Dorsolateral prefrontal cortex (tissue), 120 donors: ENCODE measurements at regions of chr3 and their contacts with region 1.

Region 1: DNA sequence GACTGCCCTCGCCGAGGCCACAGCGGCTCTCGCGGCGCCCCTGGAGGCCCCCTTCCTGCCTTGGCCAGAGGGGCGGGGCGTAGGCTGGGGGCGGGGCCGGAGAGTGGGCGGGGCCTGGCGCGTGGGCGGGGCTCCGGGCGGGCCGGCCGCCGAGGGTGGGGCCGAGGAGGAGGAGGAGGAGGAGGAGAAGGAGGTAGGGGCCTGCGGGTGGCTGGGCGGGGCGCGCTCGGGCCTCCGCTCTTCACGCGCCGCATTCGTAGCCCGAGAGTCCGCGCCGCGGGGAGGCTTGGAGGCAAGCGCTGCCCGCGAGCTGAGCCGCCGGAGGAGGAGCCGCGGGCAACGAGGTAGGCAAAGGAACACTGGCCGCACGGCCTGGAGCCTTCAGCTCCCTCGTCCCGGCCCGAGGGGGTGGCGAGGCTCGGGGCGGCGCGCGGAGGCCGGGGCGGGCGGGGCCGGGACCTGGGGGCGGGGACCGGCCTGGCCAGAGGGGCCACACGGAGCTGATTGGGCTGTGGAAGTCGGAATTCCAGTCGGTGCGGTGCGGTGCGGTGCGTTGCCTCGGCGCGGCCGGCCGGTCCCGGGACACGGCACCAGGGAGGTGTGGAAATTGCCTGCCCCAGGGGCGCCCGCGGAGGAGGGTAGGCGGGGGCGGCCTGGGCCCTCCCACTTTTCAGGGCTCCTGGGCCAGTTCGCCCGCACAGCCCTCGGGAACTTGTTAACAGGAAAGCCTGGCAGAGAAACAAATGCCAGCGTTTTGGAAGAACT is at the start of gene PPP2R3A:
- DNase-seq: peak; percentile 73 to 92 (median 82)
- H3K4me3 ChIP-seq: peak within 1 kb of the TSS; percentile 66 to 94 (median 86)
- H3K27ac ChIP-seq: peak within 1 kb of the TSS; percentile 42 to 95 (median 87)
- H3K27me3 ChIP-seq: no peaks in the 10 kb centered on the region
- CTCF ChIP-seq: peak in 13 of 56 donors; percentile 1 to 29 (median 16)
- total RNA-seq, gene PPP2R3A: 7.2 to 32.1 (median 14.4) TPM

Region 2: DNA sequence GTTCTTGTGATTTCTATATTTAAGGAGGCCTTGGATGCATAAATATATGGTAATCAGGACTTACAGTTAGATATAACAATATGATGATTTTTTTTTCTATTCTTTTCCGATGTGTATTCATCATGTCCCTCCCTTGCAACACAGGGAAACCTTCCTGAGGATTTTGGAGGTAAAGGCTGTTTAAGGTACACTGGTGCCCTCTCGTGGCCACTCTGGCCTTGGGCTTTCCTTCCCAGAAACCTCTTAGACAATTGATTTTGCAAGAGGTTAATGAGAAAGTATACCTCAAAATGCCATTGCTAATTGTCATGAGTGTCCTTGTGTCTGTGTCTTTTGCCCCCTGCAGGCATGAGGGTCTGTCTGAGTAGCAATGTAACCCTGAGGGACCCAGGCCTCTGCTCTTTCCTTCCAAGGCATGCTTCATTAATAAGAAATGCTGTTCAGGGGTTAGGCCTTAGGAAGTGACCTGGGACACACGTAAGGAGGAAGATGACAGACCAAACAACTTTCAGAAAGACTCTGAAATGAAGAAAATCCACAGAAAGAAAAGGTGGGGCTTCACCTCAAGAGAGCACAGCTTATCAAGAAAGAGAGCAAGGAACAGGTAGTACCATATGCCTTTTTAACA is 70.5 kb before region 1 on chr3:
- intact Hi-C with region 1: no loop called
- DNase-seq: peak; percentile 59 to 88 (median 74)
- H3K4me3 ChIP-seq: no peak overlapping the region
- H3K27ac ChIP-seq: no peak overlapping the region
- H3K27me3 ChIP-seq: no peaks in the 10 kb centered on the region
- CTCF ChIP-seq: peak; percentile 65 to 89 (median 79)

Region 3: DNA sequence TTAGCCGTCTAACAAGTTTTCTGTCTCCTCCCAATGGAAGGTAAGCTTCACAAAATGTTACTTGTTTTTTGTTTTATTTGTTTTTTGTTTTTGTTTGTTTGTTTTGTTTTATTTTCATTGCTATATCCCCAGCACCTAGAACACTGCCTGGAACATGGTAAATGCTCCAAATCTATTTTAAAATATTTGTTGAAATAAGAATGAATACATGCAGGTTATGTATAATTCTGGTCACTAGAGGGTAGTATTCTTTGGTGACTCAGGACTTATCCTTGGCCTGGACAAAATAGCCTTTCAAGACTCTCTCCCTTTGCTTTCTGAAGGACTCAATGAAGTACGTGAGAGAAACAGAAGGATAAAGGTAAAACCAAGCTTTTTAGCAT is 47.1 kb before region 1 on chr3:
- intact Hi-C with region 1: loop called in 1 of 2 experiments (anchors 5 kb)
- DNase-seq: no peak
- H3K4me3 ChIP-seq: no peak overlapping the region
- H3K27ac ChIP-seq: no peak overlapping the region
- H3K27me3 ChIP-seq: no peaks in the 10 kb centered on the region
- CTCF ChIP-seq: peak; percentile 21 to 82 (median 61)

Region 4: DNA sequence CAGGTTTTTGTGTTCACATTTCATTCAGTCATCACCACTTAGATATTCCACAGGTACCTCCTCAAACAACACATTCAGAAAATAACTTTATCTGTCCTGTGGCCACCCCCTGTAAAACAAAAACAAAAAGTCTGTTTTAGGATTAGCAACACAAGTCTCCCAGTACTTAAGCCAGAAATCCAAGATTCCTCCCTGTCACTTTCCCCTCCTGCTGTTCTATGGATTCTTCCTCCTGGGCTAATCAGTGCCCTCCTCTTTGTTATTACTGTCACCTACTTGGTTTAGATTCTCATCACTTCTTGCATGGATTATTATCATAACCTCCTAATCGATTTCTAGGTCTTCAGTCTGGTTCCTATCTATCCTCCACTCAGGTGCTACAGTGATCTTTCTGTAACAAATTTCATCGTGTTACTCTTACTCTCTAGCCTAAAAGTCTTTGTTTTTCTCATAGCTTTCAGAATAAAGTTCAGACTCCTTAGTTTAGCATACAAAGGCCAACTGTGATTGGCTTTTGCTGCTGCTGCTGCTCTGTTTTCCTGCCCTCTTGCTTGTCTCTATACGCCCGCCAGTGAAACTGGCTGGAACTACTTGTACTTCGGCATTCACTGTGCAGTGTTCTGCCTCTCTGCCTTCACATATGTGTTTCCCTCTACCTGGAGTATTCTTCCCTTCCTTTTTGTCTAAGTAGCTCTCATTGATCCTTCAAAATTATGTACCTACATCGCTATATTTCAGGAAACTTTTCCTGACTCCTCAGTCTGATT is 32.0 kb after region 1 on chr3:
- intact Hi-C with region 1: loop called in 1 of 2 experiments (anchors 1 kb)
- DNase-seq: peak in 4 of 10 donors; percentile 8 to 51 (median 38)
- H3K4me3 ChIP-seq: peak overlapping the region in 4 of 59 donors; percentile 15 to 38 (median 30)
- H3K27ac ChIP-seq: peak overlapping the region in 33 of 59 donors; percentile 0 to 81 (median 51)
- H3K27me3 ChIP-seq: no peaks in the 10 kb centered on the region
- CTCF ChIP-seq: peak in 1 of 56 donors; percentile 12

Region 5: GRCh38 chr3:136042608-136043221 is 77.0 kb after region 1 on chr3:
- intact Hi-C with region 1: loop called (anchors 5 to 10 kb)
- DNase-seq: no peak
- H3K4me3 ChIP-seq: no peak overlapping the region
- H3K27ac ChIP-seq: peak overlapping the region in 1 of 59 donors; percentile 2
- H3K27me3 ChIP-seq: no peaks in the 10 kb centered on the region
- CTCF ChIP-seq: peak; percentile 57 to 90 (median 75)